CD8-positive, alpha-beta T cell (primary cell): ENCODE measurements at regions of chr9 and their contacts with region 1.

Region 1: DNA sequence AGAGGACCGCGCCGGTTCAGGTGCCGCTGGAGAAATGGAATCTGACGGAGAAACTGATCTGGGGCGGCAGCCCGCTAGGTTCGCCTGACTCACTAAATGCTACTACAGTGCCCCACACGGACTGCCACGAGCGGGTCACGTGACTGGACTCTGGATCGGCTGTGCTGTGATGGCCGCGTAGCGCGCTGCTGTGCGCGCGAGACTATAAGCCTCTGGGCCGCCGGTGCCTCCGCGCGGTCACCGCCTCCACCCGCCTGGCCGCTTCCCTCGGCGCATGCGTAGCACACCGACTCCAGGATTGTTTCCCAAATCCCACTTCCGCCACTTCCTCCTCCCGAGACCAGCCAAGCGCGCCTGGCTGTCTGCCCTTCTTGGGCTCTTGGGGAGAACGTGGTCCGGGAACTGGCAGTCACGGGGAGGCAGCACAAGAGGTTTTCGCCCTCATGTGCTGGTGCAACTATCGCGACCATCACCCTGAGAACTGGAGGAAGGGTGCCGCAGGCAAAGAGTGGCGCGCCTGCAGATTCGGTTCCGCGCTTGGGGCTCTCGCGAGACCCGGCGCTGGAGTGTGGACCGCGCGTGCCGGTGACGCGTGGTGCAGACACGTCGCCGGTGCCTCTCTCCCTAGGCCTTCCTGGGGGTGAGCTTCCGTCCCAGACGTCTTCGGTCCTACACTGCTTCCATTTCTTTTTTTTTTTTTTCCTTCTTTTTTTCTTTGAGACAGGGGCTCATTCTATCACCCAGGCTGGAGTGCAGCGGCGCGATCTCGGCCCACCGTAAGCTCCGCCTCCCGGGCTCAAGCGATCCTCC is 35.8 kb upstream of the GLDC start:
- DNase-seq: peak; percentile 77 to 96 (median 89)
- ATAC-seq: peak; percentile 85
- H3K4me3 ChIP-seq: peak overlapping the region; percentile 84 to 97
- H3K4me3 Mint-ChIP-seq: peak overlapping the region; percentile 93
- H3K27ac ChIP-seq: peak overlapping the region; percentile 94 to 96
- H3K27ac Mint-ChIP-seq: peak overlapping the region; percentile 98
- H3K4me1 ChIP-seq: peaks cover 11% of the 10 kb centered on the region
- H3K4me1 Mint-ChIP-seq: peaks cover 22% of the 10 kb centered on the region
- H3K27me3 ChIP-seq: no peaks in the 10 kb centered on the region
- H3K27me3 Mint-ChIP-seq: no peaks in the 10 kb centered on the region
- CTCF ChIP-seq: no peak

Region 2: GRCh38 chr9:5450359-5451091 is 1230.8 kb before region 1 on chr9 and contains the start of gene CD274:
- CTCF ChIA-PET with region 1: no interaction called
- POLR2A ChIA-PET with region 1: no interaction called
- intact Hi-C with region 1: loop called in 1 of 2 experiments (anchors 5 kb)
- DNase-seq: peak; percentile 53 to 92 (median 74)
- ATAC-seq: peak; percentile 93
- H3K4me3 ChIP-seq: peak within 1 kb of the TSS; percentile 60 to 91
- H3K4me3 Mint-ChIP-seq: peak within 1 kb of the TSS; percentile 88
- H3K27ac ChIP-seq: peak within 1 kb of the TSS; percentile 94 to 96
- H3K27ac Mint-ChIP-seq: peak within 1 kb of the TSS; percentile 95
- H3K4me1 ChIP-seq: peaks cover 17% of the 10 kb centered on the region
- H3K4me1 Mint-ChIP-seq: peaks cover 51% of the 10 kb centered on the region
- H3K27me3 ChIP-seq: no peaks in the 10 kb centered on the region
- H3K27me3 Mint-ChIP-seq: no peaks in the 10 kb centered on the region
- CTCF ChIP-seq: peak; percentile 55
- total RNA-seq, gene CD274: 3.4 to 3.7 TPM

Region 3: DNA sequence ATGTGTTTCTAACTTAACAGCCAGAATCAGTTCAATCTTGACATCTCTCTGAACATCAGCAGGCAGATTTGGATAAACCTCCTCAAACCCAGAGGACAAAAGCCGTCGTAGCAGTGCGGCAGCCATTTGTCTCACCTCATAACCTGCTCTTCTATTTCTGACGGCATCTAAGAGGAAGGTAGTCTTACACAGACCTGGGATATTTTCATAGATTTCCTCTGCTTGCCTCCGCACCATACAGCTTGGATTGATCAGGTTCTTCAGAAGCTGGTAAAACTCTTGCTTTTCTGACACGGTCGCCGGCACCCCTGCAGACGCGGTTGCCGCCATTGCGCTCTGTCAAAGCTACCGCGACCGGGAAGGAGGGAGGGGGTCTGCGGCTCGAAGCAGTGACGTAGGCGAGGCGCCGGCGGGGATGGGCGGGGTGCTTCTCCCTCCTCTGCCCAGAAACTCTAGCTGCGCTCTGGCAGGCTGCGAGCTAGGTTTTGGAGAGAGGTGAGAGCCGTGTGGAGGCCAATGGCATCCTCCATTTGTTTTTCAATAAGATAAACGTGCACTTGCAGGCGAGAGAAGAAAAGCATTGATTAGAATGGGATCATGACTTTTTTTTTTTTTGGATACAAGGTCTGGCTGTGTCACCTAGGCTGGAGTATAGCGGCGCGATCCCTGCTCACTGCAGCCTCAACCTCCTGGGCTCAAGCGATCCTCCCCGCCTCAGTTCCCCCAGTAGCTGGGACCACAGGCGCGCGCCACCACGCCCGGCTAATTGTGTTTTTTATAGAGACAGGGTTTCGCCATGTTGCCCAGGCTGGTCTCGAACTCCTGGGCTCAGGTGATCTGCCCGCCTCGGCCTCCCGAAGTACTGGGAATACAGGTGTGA is 665.8 kb before region 1 on chr9 and contains the start of gene RANBP6:
- CTCF ChIA-PET with region 1: no interaction called
- POLR2A ChIA-PET with region 1: interaction called, 3 read pairs
- intact Hi-C with region 1: loop called in 1 of 2 experiments (anchors 2 kb)
- DNase-seq: peak; percentile 83 to 94 (median 92)
- ATAC-seq: peak; percentile 99
- H3K4me3 ChIP-seq: peak within 1 kb of the TSS; percentile 76 to 80
- H3K4me3 Mint-ChIP-seq: peak within 1 kb of the TSS; percentile 93
- H3K27ac ChIP-seq: peak within 1 kb of the TSS; percentile 79 to 87
- H3K27ac Mint-ChIP-seq: peak within 1 kb of the TSS; percentile 98
- H3K4me1 ChIP-seq: peaks cover 12% of the 10 kb centered on the region
- H3K4me1 Mint-ChIP-seq: peaks cover 32% of the 10 kb centered on the region
- H3K27me3 ChIP-seq: no peaks in the 10 kb centered on the region
- H3K27me3 Mint-ChIP-seq: no peaks in the 10 kb centered on the region
- CTCF ChIP-seq: no peak
- total RNA-seq, gene RANBP6: 38.1 to 39.7 TPM

Region 4: GRCh38 chr9:6616951-6617602 is 64.3 kb before region 1 on chr9:
- CTCF ChIA-PET with region 1: no interaction called
- POLR2A ChIA-PET with region 1: no interaction called
- intact Hi-C with region 1: no loop called
- DNase-seq: no peak
- ATAC-seq: no peak
- H3K4me3 ChIP-seq: no peak overlapping the region
- H3K4me3 Mint-ChIP-seq: no peak overlapping the region
- H3K27ac ChIP-seq: no peak overlapping the region
- H3K27ac Mint-ChIP-seq: no peak overlapping the region
- H3K4me1 ChIP-seq: no peaks in the 10 kb centered on the region
- H3K4me1 Mint-ChIP-seq: no peaks in the 10 kb centered on the region
- H3K27me3 ChIP-seq: no peaks in the 10 kb centered on the region
- H3K27me3 Mint-ChIP-seq: peaks cover 2% of the 10 kb centered on the region
- CTCF ChIP-seq: no peak

Region 5: DNA sequence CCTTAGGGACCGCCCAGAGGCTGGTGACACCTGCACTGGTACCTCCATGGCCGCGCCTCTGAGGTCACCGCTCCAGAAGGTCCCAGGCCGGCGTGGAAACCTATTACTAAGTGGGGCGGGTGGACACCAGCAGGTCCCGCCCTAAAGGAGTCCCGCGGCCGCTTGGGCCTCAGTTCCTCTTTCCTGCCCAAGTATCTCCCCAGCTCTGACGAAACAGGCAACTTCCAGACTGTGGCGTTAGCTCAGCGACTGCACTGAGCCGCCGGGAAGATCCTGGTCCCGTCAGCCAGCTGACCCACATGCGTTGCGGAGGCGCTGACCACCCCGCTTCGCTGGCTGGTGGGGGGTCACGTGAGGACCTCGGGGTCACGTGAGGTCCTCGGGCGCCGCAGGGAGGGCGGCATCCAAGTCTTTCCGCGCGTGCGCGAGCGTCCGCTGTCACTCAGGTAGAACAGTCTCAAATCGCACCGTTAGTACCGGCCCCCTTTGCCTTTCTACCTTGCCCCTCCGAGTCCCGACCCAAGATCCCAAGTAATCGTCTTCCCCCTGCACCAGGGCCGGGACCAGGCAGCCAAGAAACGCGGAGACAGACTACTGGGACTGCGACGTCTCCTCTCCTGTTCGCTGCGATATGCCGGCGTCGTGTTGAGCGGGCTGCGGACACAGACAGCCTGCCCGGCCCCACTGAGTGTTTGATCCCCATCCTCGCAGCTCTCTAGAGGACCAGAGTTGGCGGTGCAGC is 22.7 kb after region 1 on chr9:
- CTCF ChIA-PET with region 1: interaction called, 4 read pairs
- POLR2A ChIA-PET with region 1: interaction called, 34 read pairs
- intact Hi-C with region 1: loop called (anchors 1 kb)
- DNase-seq: peak; percentile 61 to 94 (median 86)
- ATAC-seq: peak; percentile 82
- H3K4me3 ChIP-seq: peak overlapping the region; percentile 80 to 99
- H3K4me3 Mint-ChIP-seq: peak overlapping the region; percentile 100
- H3K27ac ChIP-seq: peak overlapping the region; percentile 94 to 96
- H3K27ac Mint-ChIP-seq: peak overlapping the region; percentile 100
- H3K4me1 ChIP-seq: peaks cover 10% of the 10 kb centered on the region
- H3K4me1 Mint-ChIP-seq: peaks cover 13% of the 10 kb centered on the region
- H3K27me3 ChIP-seq: no peaks in the 10 kb centered on the region
- H3K27me3 Mint-ChIP-seq: no peaks in the 10 kb centered on the region
- CTCF ChIP-seq: no peak

Region 6: GRCh38 chr9:6757456-6758247 is 76.3 kb after region 1 on chr9 and contains the start of gene KDM4C:
- CTCF ChIA-PET with region 1: interaction called, 3 read pairs
- POLR2A ChIA-PET with region 1: interaction called, 70 read pairs
- intact Hi-C with region 1: loop called in 1 of 2 experiments (anchors 1 kb)
- DNase-seq: peak; percentile 88 to 98 (median 94)
- ATAC-seq: peak; percentile 74
- H3K4me3 ChIP-seq: peak within 1 kb of the TSS; percentile 79 to 80
- H3K4me3 Mint-ChIP-seq: peak within 1 kb of the TSS; percentile 96
- H3K27ac ChIP-seq: peak within 1 kb of the TSS; percentile 97
- H3K27ac Mint-ChIP-seq: peak within 1 kb of the TSS; percentile 100
- H3K4me1 ChIP-seq: peaks cover 15% of the 10 kb centered on the region
- H3K4me1 Mint-ChIP-seq: peaks cover 39% of the 10 kb centered on the region
- H3K27me3 ChIP-seq: no peaks in the 10 kb centered on the region
- H3K27me3 Mint-ChIP-seq: no peaks in the 10 kb centered on the region
- CTCF ChIP-seq: no peak
- total RNA-seq, gene KDM4C: 51.6 to 54.6 TPM